HepG2 (cell line): ENCODE measurements at regions of chr16 and their contacts with region 1.

Region 1: GRCh38 chr16:23149349-23149996 is at the start of gene USP31:
- DNase-seq: peak; percentile 96
- ATAC-seq: peak; percentile 98
- H3K4me3 ChIP-seq: peak within 1 kb of the TSS; percentile 95 to 99 (median 95)
- H3K27ac ChIP-seq: peak within 1 kb of the TSS; percentile 74
- H3K4me1 ChIP-seq: peaks cover 61% of the 10 kb centered on the region
- H3K27me3 ChIP-seq: peaks cover 0 to 5% of the 10 kb centered on the region in 2 experiments; a peak in 1 of 5 replicates
- CTCF ChIP-seq: peak; percentile 28; the same call in 1 of the 2 replicates
- EP300 ChIP-seq: no peak
- POLR2A ChIP-seq: peak in 1 of 2 experiments; percentile 62; a peak in 1 of 4 replicates
- RAD21 ChIP-seq: peak; percentile 47; the same call in 1 of the 2 replicates
- total RNA-seq, gene USP31: 22.5 and 29.1 TPM in 2 replicates

Region 2: DNA sequence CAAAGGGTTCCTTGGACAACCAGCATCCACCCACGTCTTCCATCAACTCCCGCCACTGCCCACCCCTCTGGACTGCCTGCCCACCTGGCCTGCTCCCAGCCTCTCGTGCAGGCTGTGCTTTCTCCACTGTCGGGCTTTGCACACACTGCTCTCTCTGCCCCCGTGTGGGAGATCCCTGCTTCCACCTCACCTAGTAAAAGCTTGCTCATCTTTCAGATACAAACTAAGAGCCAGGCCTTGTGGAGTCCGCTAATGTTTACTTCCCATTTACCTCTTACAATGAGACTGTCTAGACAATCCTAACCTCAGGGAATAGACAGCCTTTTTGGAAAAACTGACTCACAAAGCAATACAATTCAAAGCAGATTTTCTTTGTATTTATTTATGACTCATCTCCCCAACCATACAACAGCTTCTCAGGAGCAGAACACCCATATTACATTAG is 67.8 kb before region 1 on chr16:
- CTCF ChIA-PET with region 1: no interaction called
- POLR2A ChIA-PET with region 1: no interaction called
- in situ Hi-C with region 1: loop called (anchors 10 kb)
- intact Hi-C with region 1: no loop called
- DNase-seq: no peak
- ATAC-seq: no peak; the same call in 2 of the 3 replicates
- H3K4me3 ChIP-seq: no peak overlapping the region
- H3K27ac ChIP-seq: no peak overlapping the region
- H3K4me1 ChIP-seq: no peaks in the 10 kb centered on the region
- H3K27me3 ChIP-seq: no peaks in the 10 kb centered on the region
- CTCF ChIP-seq: no peak
- EP300 ChIP-seq: no peak
- POLR2A ChIP-seq: no peak
- RAD21 ChIP-seq: no peak

Region 3: DNA sequence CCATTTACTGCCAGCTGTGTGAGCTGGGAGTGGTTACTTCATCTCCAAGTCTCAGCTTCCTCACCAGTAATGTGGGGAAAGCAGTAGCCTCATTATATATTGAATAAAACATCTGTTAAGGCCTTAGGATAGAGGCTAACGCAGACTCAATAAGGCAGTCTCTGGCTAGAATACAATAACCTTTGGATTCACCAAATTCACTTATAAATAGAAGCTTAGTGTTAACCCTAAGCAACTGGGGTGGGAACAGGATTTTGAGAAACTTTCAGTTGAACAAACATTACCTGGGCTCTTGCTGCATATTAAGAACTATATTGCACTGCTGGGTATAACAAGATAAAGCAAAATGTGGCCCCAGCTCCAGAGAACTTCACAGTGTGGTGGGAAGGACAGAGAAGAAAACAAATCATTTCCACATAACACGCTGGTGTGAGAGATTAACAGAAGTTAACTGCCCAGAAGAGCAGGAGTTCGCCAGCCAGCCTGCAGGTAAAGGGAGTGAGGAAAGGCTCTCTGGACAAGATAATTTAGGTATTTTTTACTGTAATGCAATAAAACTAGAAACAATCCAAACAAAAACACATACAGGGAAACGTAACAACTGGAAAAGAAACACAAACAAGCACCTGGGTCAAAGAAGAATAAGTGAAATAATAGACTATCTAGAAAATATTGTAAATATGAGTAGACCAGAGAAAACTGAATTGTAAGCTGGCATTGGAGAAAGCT is 57.2 kb before region 1 on chr16:
- CTCF ChIA-PET with region 1: no interaction called
- POLR2A ChIA-PET with region 1: interaction called, 5 read pairs
- in situ Hi-C with region 1: loop called (anchors 10 kb)
- intact Hi-C with region 1: loop called (anchors 1 kb)
- DNase-seq: no peak
- ATAC-seq: peak; percentile 73
- H3K4me3 ChIP-seq: peak overlapping the region in 2 of 3 experiments; percentile 5 to 29; a peak in 2 of 6 replicates
- H3K27ac ChIP-seq: peak overlapping the region; percentile 67
- H3K4me1 ChIP-seq: peaks cover 55% of the 10 kb centered on the region
- H3K27me3 ChIP-seq: no peaks in the 10 kb centered on the region
- CTCF ChIP-seq: no peak
- EP300 ChIP-seq: no peak
- POLR2A ChIP-seq: no peak
- RAD21 ChIP-seq: no peak

Region 4: DNA sequence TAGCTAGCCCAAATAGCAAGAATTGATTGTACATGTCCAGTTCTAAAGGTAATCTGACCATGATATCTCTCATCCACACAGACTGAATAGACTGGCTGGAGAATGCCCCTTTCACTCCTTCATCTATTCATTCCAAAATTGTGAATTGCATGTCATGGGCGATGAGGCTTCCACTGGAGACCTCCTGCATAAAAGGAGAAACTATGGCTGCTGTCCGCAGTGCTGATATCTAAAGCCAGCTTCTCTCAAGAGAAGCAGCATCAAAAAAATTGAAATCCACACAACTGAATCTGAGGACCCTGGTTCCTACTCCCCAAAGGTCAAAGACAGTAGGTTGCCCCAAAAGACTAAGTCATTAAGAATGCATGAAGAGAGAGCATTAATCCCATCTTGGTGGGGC is 25.1 kb after region 1 on chr16:
- CTCF ChIA-PET with region 1: no interaction called
- POLR2A ChIA-PET with region 1: no interaction called
- in situ Hi-C with region 1: no loop called
- intact Hi-C with region 1: no loop called
- DNase-seq: no peak
- ATAC-seq: peak; percentile 35; the same call in 1 of the 3 replicates
- H3K4me3 ChIP-seq: no peak overlapping the region
- H3K27ac ChIP-seq: no peak overlapping the region
- H3K4me1 ChIP-seq: no peaks in the 10 kb centered on the region
- H3K27me3 ChIP-seq: peaks cover 0 to 10% of the 10 kb centered on the region in 2 experiments; a peak in 2 of 5 replicates
- CTCF ChIP-seq: no peak
- EP300 ChIP-seq: no peak
- POLR2A ChIP-seq: no peak
- RAD21 ChIP-seq: no peak

Region 5: DNA sequence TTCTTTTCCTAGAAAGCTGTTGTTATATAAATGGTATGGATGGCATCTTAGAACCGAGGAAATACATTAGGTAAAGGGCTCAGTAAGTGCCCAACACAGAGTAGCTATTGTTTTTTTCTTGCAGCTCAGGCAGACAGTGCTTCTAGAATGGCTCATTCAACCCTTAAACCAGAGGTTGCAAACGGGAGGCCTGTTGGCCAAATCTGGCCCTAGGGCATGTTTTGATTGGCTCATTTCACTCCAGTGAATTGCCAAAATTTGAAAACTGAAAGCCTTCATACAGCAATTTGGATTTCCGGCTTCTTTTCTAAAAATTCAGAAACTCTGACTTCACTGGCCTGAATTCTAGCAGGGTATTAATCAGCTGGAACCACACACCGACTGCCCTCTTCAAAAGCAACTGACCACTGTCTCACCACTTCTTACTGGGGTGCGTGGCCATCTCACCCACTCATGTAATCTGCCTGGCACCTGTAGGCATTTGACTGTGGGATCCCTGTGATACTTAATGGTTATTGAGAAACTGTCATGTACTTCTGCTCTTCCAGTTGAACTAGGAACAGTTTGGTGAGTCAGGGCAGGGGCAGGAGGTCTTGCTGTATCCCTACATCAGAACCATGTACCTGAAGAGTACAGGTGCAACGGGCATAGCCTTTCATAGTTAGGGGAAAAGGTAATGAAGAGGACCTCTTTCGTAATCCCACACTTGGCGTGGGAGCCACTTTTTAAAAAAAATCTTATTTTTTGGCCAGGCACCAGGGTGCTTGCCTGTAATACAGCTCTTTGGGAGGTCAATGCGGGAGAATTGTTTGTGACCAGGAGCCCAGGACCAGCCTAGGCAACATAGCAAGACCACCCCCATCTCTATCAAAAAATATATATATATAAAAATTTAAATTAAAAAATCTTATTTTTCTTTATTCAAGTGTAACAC is 99.1 kb after region 1 on chr16:
- CTCF ChIA-PET with region 1: no interaction called
- POLR2A ChIA-PET with region 1: no interaction called
- in situ Hi-C with region 1: no loop called
- intact Hi-C with region 1: no loop called
- DNase-seq: no peak
- ATAC-seq: no peak
- H3K4me3 ChIP-seq: no peak overlapping the region
- H3K27ac ChIP-seq: no peak overlapping the region
- H3K4me1 ChIP-seq: no peaks in the 10 kb centered on the region
- H3K27me3 ChIP-seq: peaks cover 4 to 27% of the 10 kb centered on the region in 2 experiments; a peak in 4 of 5 replicates
- CTCF ChIP-seq: no peak
- EP300 ChIP-seq: no peak
- POLR2A ChIP-seq: no peak
- RAD21 ChIP-seq: no peak